ENCODE measurements at regions of chr1 and their contacts with region 1.

Region 1: DNA sequence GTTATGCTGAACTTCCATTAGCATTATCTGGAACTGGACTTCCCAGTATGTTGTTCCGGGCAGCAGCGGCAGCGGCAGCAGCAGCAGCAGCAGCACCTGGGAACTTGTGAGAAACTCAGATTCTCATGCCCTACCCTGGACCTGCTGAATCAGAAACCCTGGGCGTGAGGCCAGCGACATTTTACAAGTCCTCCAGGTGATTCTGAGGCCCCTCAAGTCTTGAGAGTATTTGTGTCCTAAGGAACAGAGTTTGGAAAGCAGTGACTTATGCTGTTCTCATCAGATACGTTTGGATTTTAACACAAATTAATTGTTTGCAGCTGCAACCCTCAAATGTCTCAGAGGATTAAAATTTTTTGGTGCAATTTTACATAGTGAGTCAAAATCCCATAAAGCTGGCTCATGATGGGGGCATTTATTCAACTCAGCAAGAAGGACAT is 157.2 kb upstream of the KAZN start:
- DNase-seq: peak; percentile 34
- H3K4me3 ChIP-seq: no peak overlapping the region
- CTCF ChIP-seq: no peak

Region 2: DNA sequence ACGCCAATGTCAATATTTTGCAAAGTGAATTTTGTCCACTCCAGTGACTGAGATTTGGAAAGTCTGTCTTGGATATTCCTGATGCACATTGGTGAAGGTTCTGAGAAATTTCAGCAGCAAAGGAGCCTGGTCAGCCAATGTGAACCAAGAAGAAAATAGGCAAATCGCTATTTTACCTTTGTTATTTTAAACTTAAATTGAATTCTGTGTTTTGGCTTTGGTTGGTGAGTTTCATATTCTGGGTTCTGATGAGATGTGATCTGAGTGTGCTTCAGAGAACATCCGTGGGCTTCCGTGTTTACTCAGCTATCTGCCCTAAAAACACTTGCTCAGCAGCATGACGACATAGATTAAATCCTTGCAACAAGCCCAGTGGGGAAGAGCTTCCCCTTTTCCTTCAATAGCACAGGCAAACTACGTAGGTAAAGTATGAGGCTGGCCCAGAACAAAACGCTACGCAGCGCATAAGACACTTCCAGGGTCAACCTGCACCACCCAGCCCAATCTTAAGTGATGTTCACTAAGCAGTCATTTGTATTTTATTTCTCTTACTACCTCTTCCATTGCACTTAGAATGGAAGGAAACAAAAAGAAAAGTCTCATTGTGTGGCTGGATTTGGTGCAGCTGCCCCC is 19.2 kb before region 1 on chr1:
- CTCF ChIA-PET with region 1: no interaction called
- POLR2A ChIA-PET with region 1: no interaction called
- DNase-seq: no peak
- H3K4me3 ChIP-seq: no peak overlapping the region
- CTCF ChIP-seq: no peak

Region 3: DNA sequence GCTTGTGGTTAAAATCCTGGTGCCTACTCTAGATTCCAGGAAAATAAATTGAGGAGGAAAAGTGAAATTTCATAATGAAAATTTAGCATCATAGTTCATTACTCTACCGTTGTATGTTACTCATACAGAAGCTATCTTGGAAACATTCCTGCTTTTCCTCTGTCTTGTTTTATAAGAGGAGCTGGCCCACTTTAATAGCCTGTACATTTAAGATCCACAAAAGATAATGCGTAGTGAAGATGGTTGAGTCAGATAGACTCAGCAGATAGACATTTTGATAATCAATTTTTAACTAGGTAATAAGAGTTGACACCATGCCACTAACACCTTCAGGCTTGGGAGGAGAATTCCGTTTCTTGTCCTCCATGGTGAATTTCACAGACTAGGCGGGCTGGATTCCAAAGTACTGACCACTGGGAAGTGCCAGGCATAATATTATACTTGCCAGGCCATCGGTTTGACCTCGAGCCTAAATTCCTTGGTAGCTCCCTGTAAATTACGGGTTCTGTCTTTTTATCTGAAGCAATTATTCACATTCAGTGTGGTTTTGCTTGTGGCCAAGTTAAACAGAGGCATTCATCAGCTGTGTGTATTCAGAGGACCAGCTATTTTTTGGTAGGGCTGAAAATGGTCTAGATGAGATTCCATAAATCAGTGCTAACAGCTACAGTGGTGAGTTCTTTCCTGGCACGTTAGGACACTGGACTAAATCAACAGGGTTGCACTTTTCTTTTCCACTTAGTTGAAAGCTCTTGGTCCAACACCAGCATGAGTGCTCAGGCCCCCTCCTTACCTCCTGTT is 45.3 kb after region 1 on chr1:
- CTCF ChIA-PET with region 1: no interaction called
- POLR2A ChIA-PET with region 1: interaction called, 13 read pairs
- DNase-seq: peak; percentile 87
- H3K4me3 ChIP-seq: no peak overlapping the region
- CTCF ChIP-seq: no peak

Measured in AG04449 (cell line).